ENCODE measurements at regions of chr12 and their contacts with region 1.

Region 1: GRCh38 chr12:57904848-57905811 is 36.2 kb upstream of the ATP23 start:
- DNase-seq: peak; percentile 76
- ATAC-seq: peak; percentile 100
- H3K4me3 Mint-ChIP-seq: peak overlapping the region; percentile 66
- H3K27ac Mint-ChIP-seq: no peak overlapping the region
- H3K4me1 Mint-ChIP-seq: peaks cover 13% of the 10 kb centered on the region
- H3K27me3 Mint-ChIP-seq: peaks cover 5% of the 10 kb centered on the region
- CTCF ChIP-seq: peak; percentile 88

Region 2: DNA sequence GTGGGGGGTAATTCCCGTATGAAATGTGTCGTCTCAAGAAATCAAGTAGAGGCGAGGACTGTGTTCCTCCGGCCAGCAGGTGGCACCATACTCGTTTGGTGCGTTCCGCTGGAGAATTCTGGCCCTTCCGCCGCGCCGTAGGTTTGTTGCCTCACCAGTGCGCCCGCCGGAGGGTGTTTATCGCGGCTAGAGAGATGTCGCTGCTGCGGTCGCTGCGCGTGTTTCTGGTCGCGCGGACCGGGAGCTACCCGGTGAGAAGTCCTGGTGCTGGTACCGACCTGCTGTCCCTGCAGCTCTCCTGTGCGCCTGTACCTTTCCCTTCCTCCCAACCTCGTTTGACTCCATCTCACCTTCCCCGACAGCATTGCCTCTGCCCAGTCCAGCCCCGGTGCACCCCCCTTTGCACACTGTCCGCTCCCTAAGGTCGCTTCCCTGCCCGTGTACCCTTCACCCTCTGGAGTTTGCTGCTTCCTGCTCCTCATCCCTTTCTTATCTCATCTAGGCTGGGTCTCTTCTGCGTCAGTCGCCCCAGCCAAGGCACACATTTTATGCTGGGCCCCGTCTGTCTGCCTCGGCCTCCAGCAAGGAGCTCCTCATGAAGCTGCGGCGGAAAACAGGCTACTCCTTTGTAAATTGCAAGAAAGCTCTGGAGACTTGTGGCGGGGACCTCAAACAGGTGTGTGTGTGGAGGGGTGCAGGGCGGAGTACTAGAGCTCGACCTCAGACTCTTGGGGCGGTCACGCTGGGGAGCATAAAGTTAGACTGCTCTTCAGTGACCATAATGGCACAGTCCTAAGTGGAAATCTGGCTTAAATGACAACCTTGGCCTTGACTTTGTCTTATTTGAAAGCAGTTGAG is 122.3 kb before region 1 on chr12 and contains the start of gene TSFM:
- CTCF ChIA-PET with region 1: interaction called, 5 read pairs
- POLR2A ChIA-PET with region 1: no interaction called
- intact Hi-C with region 1: loop called (anchors 1 kb)
- DNase-seq: peak; percentile 93
- ATAC-seq: peak; percentile 97
- H3K4me3 Mint-ChIP-seq: peak within 1 kb of the TSS; percentile 99
- H3K27ac Mint-ChIP-seq: peak within 1 kb of the TSS; percentile 97
- H3K4me1 Mint-ChIP-seq: peaks cover 22% of the 10 kb centered on the region
- H3K27me3 Mint-ChIP-seq: no peaks in the 10 kb centered on the region
- CTCF ChIP-seq: no peak
- total RNA-seq, gene TSFM: 28.4 and 33.4 TPM in 2 replicates

Region 3: GRCh38 chr12:57836442-57837375 is 68.4 kb before region 1 on chr12:
- CTCF ChIA-PET with region 1: interaction called, 96 read pairs
- POLR2A ChIA-PET with region 1: interaction called, 91 read pairs
- intact Hi-C with region 1: loop called (anchors 1 kb)
- DNase-seq: no peak
- ATAC-seq: peak; percentile 20
- H3K4me3 Mint-ChIP-seq: peak overlapping the region; percentile 64
- H3K27ac Mint-ChIP-seq: peak overlapping the region; percentile 84
- H3K4me1 Mint-ChIP-seq: peaks cover 97% of the 10 kb centered on the region
- H3K27me3 Mint-ChIP-seq: no peaks in the 10 kb centered on the region
- CTCF ChIP-seq: no peak

Region 4: GRCh38 chr12:57865090-57865751 is 39.9 kb before region 1 on chr12:
- CTCF ChIA-PET with region 1: interaction called, 15 read pairs
- POLR2A ChIA-PET with region 1: no interaction called
- intact Hi-C with region 1: no loop called
- DNase-seq: peak; percentile 39
- ATAC-seq: peak; percentile 86
- H3K4me3 Mint-ChIP-seq: peak overlapping the region; percentile 69
- H3K27ac Mint-ChIP-seq: no peak overlapping the region
- H3K4me1 Mint-ChIP-seq: peaks cover 8% of the 10 kb centered on the region
- H3K27me3 Mint-ChIP-seq: peaks cover 22% of the 10 kb centered on the region
- CTCF ChIP-seq: no peak

Region 5: DNA sequence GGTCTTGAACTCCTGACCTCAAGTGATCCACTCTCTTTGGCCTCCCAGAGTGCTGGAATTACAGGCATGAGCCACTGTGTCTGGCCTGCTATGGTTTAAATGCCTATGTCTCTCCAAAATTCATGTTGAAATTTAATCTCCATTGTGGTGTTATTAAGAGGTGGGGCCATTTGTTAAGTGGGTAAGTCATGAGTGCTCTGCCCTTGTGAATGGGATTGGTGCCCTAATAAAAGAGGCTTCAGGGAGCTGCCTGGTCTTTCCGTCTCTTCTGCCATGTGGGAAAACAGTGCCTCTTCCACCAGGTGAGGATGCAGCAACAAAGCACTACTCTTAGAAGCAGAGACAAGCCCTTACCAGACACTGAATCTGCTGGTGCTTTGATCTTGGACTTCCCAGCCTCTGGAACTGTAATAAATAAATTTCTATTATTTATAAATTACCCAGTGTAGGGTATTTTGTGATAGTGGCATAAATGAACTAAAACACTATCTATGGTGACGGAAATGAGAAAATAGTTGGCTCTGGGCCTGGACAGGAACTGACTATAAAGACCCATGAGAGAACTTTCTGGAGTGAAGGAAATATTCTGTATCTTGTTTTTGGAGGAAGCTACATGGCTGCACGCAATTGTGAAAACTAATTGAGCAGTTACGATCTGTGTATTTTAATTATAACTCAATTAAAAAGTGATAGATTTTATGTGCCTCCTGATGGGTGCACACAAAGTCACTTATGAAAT is 24.1 kb after region 1 on chr12:
- CTCF ChIA-PET with region 1: no interaction called
- POLR2A ChIA-PET with region 1: no interaction called
- intact Hi-C with region 1: no loop called
- DNase-seq: no peak
- ATAC-seq: no peak
- H3K4me3 Mint-ChIP-seq: no peak overlapping the region
- H3K27ac Mint-ChIP-seq: no peak overlapping the region
- H3K4me1 Mint-ChIP-seq: peaks cover under 1% of the 10 kb centered on the region
- H3K27me3 Mint-ChIP-seq: no peaks in the 10 kb centered on the region
- CTCF ChIP-seq: no peak

Region 6: DNA sequence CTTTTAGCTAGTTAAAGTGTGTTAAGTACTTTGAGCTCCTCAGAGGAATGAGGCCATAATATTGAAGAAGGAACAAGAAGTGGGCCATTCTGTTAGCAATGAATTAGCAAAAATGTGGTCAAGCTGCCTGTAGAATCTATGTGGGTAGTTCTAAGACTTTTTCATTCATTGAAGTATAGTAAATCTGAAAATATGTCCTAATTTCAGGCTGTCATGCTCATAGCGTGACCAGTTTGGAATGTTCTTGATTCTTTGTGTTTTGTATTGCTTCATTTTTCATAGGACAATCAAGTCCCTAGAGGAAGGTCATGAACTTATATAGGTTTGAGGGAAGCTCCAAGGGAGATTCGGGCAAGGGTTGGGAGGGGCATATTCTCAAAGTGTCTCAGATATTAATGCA is 47.6 kb after region 1 on chr12:
- CTCF ChIA-PET with region 1: no interaction called
- POLR2A ChIA-PET with region 1: no interaction called
- intact Hi-C with region 1: no loop called
- DNase-seq: no peak
- ATAC-seq: no peak
- H3K4me3 Mint-ChIP-seq: no peak overlapping the region
- H3K27ac Mint-ChIP-seq: no peak overlapping the region
- H3K4me1 Mint-ChIP-seq: no peaks in the 10 kb centered on the region
- H3K27me3 Mint-ChIP-seq: no peaks in the 10 kb centered on the region
- CTCF ChIP-seq: no peak

Region 7: DNA sequence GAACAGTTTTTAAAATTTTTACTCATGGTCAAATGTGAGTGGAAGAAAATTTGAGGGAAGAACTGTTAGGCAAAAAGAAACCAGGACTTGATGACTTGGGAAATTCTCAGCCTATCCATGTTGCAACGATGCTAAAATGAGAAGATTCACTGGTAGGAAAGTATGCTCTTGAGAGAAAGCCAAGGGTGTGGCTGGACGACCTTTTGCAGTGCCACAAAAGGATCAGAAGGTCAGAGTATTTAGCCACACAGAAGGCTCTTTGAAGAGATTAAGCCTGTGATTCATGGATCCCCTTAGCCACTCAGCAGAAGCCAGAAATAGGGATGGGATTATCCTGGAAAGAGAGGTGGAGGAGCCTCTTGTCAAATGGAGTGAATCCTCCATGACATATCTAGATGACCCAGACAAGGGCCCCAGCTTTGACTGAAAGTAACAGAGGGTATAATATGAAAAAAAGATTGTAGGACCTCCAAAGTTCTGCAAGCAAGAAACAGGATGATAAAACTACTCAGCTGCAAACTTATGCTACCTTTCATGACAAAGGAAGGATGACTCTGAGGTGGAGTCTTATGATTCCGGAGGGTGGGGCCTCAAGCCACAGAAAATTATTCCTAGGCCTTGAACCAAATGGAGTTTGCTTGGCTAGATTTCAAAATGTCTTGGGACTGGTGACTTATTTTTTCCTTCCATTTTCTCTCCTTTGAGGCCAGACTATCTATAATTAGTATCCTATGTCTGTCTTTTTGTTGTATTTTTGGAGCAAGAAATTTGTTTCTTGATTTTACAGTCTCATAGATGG is 678.6 kb after region 1 on chr12:
- CTCF ChIA-PET with region 1: no interaction called
- POLR2A ChIA-PET with region 1: no interaction called
- intact Hi-C with region 1: no loop called
- DNase-seq: no peak
- ATAC-seq: no peak
- H3K4me3 Mint-ChIP-seq: no peak overlapping the region
- H3K27ac Mint-ChIP-seq: no peak overlapping the region
- H3K4me1 Mint-ChIP-seq: no peaks in the 10 kb centered on the region
- H3K27me3 Mint-ChIP-seq: no peaks in the 10 kb centered on the region
- CTCF ChIP-seq: no peak

Measured in activated B cell treated with CpG ODN at 0.5 μM for 24 hours (primary cell).